ENCODE measurements at regions of chr16 and their contacts with region 1.

Region 1: GRCh38 chr16:11396241-11397048 is 51.2 kb downstream of the RMI2 start:
- DNase-seq: peak; percentile 63
- H3K4me3 Mint-ChIP-seq: no peak overlapping the region
- H3K27ac Mint-ChIP-seq: no peak overlapping the region
- H3K4me1 Mint-ChIP-seq: no peaks in the 10 kb centered on the region
- H3K27me3 Mint-ChIP-seq: no peaks in the 10 kb centered on the region
- CTCF ChIP-seq: peak; percentile 99

Region 2: GRCh38 chr16:11114366-11115164 is 281.9 kb before region 1 on chr16:
- CTCF ChIA-PET with region 1: no interaction called
- POLR2A ChIA-PET with region 1: no interaction called
- intact Hi-C with region 1: no loop called
- DNase-seq: no peak
- H3K4me3 Mint-ChIP-seq: no peak overlapping the region
- H3K27ac Mint-ChIP-seq: no peak overlapping the region
- H3K4me1 Mint-ChIP-seq: peaks cover 11% of the 10 kb centered on the region
- H3K27me3 Mint-ChIP-seq: no peaks in the 10 kb centered on the region
- CTCF ChIP-seq: no peak

Region 3: GRCh38 chr16:11706180-11706742 is 309.8 kb after region 1 on chr16:
- CTCF ChIA-PET with region 1: interaction called, 127 read pairs
- POLR2A ChIA-PET with region 1: no interaction called
- intact Hi-C with region 1: no loop called
- DNase-seq: no peak
- H3K4me3 Mint-ChIP-seq: no peak overlapping the region
- H3K27ac Mint-ChIP-seq: no peak overlapping the region
- H3K4me1 Mint-ChIP-seq: no peaks in the 10 kb centered on the region
- H3K27me3 Mint-ChIP-seq: no peaks in the 10 kb centered on the region
- CTCF ChIP-seq: no peak

Region 4: DNA sequence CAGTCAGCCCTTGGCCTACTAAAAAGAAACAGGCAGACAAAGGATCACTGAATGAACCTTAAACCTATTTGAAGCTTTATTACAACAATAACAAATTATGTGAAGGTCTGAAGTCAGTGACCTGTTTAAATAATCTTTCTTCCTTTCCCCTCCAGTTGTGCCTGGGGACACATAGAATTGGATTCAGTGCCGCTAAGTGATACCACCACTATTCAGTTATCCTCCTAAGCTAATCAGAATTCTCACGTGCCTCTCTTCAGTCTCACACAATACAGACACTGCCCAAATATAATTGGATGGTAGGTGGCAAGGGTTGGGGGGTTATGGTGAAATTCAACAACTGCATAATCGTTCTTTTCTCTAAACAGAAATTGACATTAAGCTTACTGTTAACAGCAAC is 334.8 kb after region 1 on chr16:
- CTCF ChIA-PET with region 1: interaction called, 11 read pairs
- POLR2A ChIA-PET with region 1: no interaction called
- intact Hi-C with region 1: no loop called
- DNase-seq: no peak
- H3K4me3 Mint-ChIP-seq: no peak overlapping the region
- H3K27ac Mint-ChIP-seq: no peak overlapping the region
- H3K4me1 Mint-ChIP-seq: no peaks in the 10 kb centered on the region
- H3K27me3 Mint-ChIP-seq: no peaks in the 10 kb centered on the region
- CTCF ChIP-seq: no peak